GM10248 (cell line): ENCODE measurements at regions of chr11 and their contacts with region 1.

Region 1: GRCh38 chr11:130861902-130862860 is 54.1 kb downstream of the SNX19 start:
- DNase-seq: peak; percentile 82
- CTCF ChIP-seq: peak; percentile 100

Region 2: GRCh38 chr11:130213143-130213978 is 648.8 kb before region 1 on chr11:
- CTCF ChIA-PET with region 1: interaction called, 15 read pairs
- POLR2A ChIA-PET with region 1: no interaction called
- DNase-seq: peak; percentile 86
- CTCF ChIP-seq: peak; percentile 94

Region 3: DNA sequence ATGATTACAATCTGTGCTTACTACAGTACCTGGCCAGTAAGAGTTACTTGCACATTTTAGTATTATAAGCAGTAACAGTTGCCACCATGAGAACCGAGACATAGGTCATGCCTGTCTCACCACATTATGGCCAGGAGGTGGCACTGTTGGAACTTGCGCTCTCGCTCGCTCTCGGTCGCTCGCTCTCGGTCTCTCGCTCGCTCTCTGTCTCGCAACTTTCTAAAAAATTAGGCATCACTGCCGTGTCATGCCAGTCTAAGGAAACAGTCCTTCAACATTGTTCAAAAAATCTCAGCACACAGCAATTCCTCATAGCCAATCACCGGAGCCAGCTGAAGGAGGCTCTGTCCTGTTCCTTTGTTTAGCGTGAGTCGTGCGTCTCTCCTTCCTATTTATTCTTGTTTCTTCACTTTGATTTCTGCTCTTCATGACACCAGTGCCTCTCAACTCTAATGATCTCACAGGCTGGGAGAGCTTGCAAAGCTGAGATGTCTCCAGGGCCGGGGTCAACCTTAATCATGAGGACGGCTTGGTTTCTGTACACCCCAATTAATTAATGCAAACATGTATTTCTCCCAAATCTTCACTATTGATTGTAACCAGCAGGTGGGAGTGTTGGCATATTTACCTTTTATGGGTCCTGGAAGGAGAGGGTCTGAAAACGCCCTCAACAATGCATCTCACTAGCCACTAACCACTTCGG is 427.5 kb before region 1 on chr11:
- CTCF ChIA-PET with region 1: interaction called, 447 read pairs
- POLR2A ChIA-PET with region 1: no interaction called
- DNase-seq: peak; percentile 71
- CTCF ChIP-seq: peak; percentile 83

Region 4: DNA sequence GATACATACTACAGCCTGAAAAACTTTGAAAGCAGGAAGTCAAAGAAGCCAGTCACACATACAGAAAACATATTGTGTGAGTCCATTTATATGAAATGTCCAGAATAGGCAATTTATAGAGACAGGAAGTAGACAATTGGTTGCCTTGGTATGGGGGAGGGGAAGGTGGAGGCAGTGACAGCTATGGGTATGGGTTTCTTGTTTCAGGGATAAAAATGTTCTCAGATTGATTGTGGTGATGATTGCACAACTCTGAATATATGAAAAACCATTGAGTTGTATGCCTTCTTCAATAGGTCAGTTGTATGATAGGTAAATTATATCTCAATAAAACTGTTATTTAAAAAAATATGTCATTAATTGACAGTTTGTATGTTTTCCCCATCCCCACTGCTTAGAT is 83.5 kb before region 1 on chr11:
- CTCF ChIA-PET with region 1: no interaction called
- POLR2A ChIA-PET with region 1: no interaction called
- DNase-seq: no peak
- CTCF ChIP-seq: no peak

Region 5: DNA sequence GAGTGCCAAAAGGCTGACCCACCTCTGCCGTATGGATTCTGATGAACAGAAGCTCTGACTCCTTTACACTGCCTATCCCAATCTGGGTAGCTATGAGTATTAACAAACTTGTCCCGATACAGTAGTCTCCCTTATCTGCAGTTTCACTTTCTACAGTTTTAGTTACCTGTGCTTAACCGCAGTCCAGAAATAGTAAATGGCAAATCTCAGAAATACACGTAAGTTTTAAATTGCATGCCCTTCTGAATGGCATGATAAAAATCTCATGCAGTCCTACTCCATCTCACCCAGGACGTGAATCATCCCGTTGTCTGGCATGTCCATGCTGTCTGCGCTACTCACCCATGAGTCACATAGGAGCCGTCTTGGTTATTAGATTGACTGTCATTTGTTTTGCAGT is 14.7 kb before region 1 on chr11:
- CTCF ChIA-PET with region 1: interaction called, 38 read pairs
- POLR2A ChIA-PET with region 1: no interaction called
- DNase-seq: no peak
- CTCF ChIP-seq: no peak

Region 6: DNA sequence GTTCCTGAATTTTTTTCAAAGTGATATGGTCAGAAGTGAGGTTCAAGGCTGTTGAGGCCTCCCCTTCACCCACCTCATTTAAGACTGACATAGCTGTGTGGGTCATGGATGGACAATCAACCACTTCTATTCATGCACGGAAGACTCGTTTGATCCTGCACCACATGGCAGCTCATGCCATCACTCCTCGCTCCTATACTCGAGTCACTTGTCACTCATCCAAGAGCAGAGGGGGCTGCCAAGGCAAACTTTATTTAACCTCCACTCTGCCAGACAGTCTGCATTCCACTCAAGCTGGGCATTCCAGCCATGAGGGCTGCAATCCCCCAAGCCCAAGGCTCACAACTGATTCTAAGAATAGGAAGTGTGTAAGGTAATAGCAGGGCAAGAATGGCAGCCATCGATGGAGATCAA is 20.0 kb after region 1 on chr11:
- CTCF ChIA-PET with region 1: interaction called, 77 read pairs
- POLR2A ChIA-PET with region 1: no interaction called
- DNase-seq: no peak
- CTCF ChIP-seq: no peak

Region 7: GRCh38 chr11:130904380-130904779 is 42.2 kb after region 1 on chr11:
- CTCF ChIA-PET with region 1: interaction called, 92 read pairs
- POLR2A ChIA-PET with region 1: no interaction called
- DNase-seq: no peak
- CTCF ChIP-seq: peak; percentile 26

Region 8: GRCh38 chr11:130940706-130941105 is 78.5 kb after region 1 on chr11:
- CTCF ChIA-PET with region 1: no interaction called
- POLR2A ChIA-PET with region 1: no interaction called
- DNase-seq: no peak
- CTCF ChIP-seq: no peak